Naive thymus-derived CD4-positive, alpha-beta T cell (primary cell): ENCODE measurements at regions of chr3 and their contacts with region 1.

Region 1: DNA sequence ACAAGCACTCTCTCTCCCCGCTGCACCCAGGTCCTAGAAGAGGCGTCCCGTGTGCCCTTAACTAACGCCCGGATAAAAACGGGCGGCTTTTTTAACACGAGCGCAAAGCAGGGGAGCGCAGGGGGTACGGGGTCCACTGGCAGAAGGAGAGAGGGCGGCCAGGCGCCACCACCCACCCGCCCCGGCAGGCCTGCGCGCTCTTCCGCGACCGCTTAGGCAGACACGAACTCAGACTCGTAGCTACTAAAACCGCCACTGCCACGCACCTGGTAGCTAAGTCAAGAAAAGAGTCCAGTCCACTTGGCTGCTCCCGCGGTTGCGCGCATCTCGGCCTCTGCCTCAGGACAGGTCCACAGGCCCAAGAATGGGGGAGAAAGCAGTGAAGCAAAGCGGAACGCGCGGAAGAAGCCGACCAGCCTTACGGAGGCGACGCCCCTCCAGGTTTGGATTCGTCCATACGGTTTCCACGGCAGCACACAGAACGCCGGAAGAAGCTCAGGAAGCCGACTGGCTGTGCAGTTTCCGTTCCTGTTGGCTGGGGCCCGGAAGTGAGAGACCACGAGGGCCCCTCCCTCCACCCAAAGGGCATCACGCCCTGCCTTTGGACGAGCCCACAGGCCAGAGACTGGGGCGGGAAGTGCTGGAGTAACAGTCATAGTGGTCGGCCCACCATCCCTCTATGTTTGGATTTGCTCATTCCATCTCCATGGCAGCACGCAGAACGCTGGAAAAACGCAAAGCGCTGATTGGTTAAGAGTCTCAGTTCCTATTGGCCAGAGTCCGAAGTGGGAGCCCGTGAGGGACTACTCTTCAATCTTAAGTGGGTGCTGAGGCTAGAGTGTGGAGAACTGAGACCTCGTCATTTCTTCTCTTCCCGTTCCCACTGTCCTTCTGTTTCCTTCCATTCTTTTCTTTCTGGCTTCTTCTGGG is at the start of gene ULK4:
- DNase-seq: peak; percentile 77 to 96 (median 94)
- ATAC-seq: peak; percentile 93
- H3K4me3 ChIP-seq: peak within 1 kb of the TSS; percentile 99
- H3K4me3 Mint-ChIP-seq: peak within 1 kb of the TSS; percentile 90 to 100 (median 98)
- H3K27ac ChIP-seq: peak within 1 kb of the TSS; percentile 83
- H3K27ac Mint-ChIP-seq: peak within 1 kb of the TSS; percentile 88 to 100 (median 96)
- H3K4me1 ChIP-seq: peaks cover 0 to 16% of the 10 kb centered on the region in 2 donors
- H3K4me1 Mint-ChIP-seq: peaks cover 8 to 22% (median 16%) of the 10 kb centered on the region in 7 donors
- H3K27me3 ChIP-seq: no peaks in the 10 kb centered on the region
- H3K27me3 Mint-ChIP-seq: peaks cover 0 to 3% (median 0%) of the 10 kb centered on the region in 5 donors
- total RNA-seq, gene ULK4: 14.0 to 22.3 (median 21.1) TPM

Region 2: DNA sequence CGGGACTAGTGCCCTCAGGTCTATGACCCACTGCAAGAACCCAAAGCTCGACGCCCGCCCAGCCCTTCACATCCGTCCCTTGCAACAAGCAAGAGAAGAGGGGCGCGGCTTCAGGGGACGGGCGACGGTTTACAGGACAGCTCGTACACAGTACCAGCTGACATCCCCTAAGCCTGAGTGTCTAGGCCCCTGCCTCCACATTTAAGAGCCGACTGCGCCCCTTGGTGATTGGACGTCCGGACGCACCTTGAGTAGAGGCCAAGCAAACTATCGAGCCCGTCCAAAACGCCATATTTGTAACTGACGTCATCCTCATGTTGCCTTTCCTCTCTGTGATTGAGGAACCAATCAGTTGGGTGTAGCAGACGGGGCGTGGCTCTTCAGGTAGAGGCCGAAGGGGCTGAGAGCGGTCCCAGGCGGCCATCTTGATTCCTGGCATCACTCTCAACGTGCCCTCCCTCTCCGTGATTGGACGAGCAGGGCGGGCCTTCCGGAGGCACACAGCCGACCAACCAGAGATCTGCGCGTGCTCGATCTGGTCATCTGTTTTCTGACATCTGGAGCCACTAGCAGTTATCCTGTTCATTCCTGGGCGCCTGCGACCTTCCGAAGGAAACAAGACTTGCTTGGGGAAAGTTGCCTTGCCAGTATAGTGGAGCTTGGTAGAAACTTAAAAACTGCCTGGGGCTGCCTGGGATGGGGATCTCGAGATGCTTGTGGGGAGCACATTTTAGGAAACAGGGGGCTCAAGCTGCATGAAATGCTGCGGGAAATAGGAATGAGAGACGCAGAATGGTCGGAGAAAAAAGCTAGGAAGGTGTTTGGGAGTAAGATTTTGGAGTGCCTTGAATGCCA is 1508.9 kb before region 1 on chr3:
- CTCF ChIA-PET with region 1: no interaction called
- POLR2A ChIA-PET with region 1: interaction called, 6 read pairs
- intact Hi-C with region 1: loop called (anchors 1 kb)
- DNase-seq: peak; percentile 81 to 97 (median 93)
- ATAC-seq: peak; percentile 95
- H3K4me3 ChIP-seq: peak overlapping the region; percentile 79
- H3K4me3 Mint-ChIP-seq: peak overlapping the region; percentile 88 to 99 (median 94)
- H3K27ac ChIP-seq: peak overlapping the region; percentile 94
- H3K27ac Mint-ChIP-seq: peak overlapping the region; percentile 96 to 100 (median 98)
- H3K4me1 ChIP-seq: peaks cover 13 to 18% of the 10 kb centered on the region in 2 donors
- H3K4me1 Mint-ChIP-seq: peaks cover 13 to 53% (median 39%) of the 10 kb centered on the region in 7 donors
- H3K27me3 ChIP-seq: no peaks in the 10 kb centered on the region
- H3K27me3 Mint-ChIP-seq: no peaks in the 10 kb centered on the region

Region 3: GRCh38 chr3:41198950-41199865 is 762.8 kb before region 1 on chr3 and contains the start of gene CTNNB1:
- CTCF ChIA-PET with region 1: no interaction called
- POLR2A ChIA-PET with region 1: interaction called, 3 read pairs
- intact Hi-C with region 1: loop called (anchors 1 kb)
- DNase-seq: peak; percentile 88 to 94 (median 92)
- ATAC-seq: peak; percentile 93
- H3K4me3 ChIP-seq: peak within 1 kb of the TSS; percentile 79
- H3K4me3 Mint-ChIP-seq: peak within 1 kb of the TSS; percentile 90 to 100 (median 95)
- H3K27ac ChIP-seq: peak within 1 kb of the TSS; percentile 97
- H3K27ac Mint-ChIP-seq: peak within 1 kb of the TSS; percentile 92 to 98 (median 96)
- H3K4me1 ChIP-seq: peaks cover 26 to 39% of the 10 kb centered on the region in 2 donors
- H3K4me1 Mint-ChIP-seq: peaks cover 31 to 43% (median 38%) of the 10 kb centered on the region in 7 donors
- H3K27me3 ChIP-seq: peaks cover 0 to 3% of the 10 kb centered on the region in 2 donors
- H3K27me3 Mint-ChIP-seq: peaks cover 0 to 29% (median 0%) of the 10 kb centered on the region in 5 donors
- total RNA-seq, gene CTNNB1: 118 to 227 (median 177) TPM

Region 4: GRCh38 chr3:41985018-41985417 is 23.0 kb after region 1 on chr3:
- CTCF ChIA-PET with region 1: no interaction called
- POLR2A ChIA-PET with region 1: no interaction called
- intact Hi-C with region 1: no loop called
- DNase-seq: no peak
- ATAC-seq: no peak
- H3K4me3 ChIP-seq: no peak overlapping the region
- H3K4me3 Mint-ChIP-seq: no peak overlapping the region
- H3K27ac ChIP-seq: no peak overlapping the region
- H3K27ac Mint-ChIP-seq: no peak overlapping the region
- H3K4me1 ChIP-seq: no peaks in the 10 kb centered on the region
- H3K4me1 Mint-ChIP-seq: peaks cover 0 to 3% (median 0%) of the 10 kb centered on the region in 7 donors
- H3K27me3 ChIP-seq: no peaks in the 10 kb centered on the region
- H3K27me3 Mint-ChIP-seq: peaks cover 0 to 3% (median 0%) of the 10 kb centered on the region in 5 donors

Region 5: GRCh38 chr3:42080452-42080891 is 118.5 kb after region 1 on chr3:
- CTCF ChIA-PET with region 1: no interaction called
- POLR2A ChIA-PET with region 1: no interaction called
- intact Hi-C with region 1: loop called in 1 of 2 experiments (anchors 5 kb)
- DNase-seq: no peak
- ATAC-seq: peak; percentile 58
- H3K4me3 ChIP-seq: no peak overlapping the region
- H3K4me3 Mint-ChIP-seq: peak overlapping the region in 2 of 10 donors; percentile 9 to 61
- H3K27ac ChIP-seq: no peak overlapping the region
- H3K27ac Mint-ChIP-seq: peak overlapping the region in 5 of 9 donors; percentile 40 to 75 (median 66)
- H3K4me1 ChIP-seq: peaks cover 13 to 16% of the 10 kb centered on the region in 2 donors
- H3K4me1 Mint-ChIP-seq: peaks cover 38 to 60% (median 43%) of the 10 kb centered on the region in 7 donors
- H3K27me3 ChIP-seq: no peaks in the 10 kb centered on the region
- H3K27me3 Mint-ChIP-seq: no peaks in the 10 kb centered on the region

Region 6: GRCh38 chr3:42214565-42215283 is 252.7 kb after region 1 on chr3:
- CTCF ChIA-PET with region 1: no interaction called
- POLR2A ChIA-PET with region 1: no interaction called
- intact Hi-C with region 1: loop called in 1 of 2 experiments (anchors 5 kb)
- DNase-seq: no peak
- ATAC-seq: no peak
- H3K4me3 ChIP-seq: no peak overlapping the region
- H3K4me3 Mint-ChIP-seq: peak overlapping the region in 9 of 10 donors; percentile 0 to 69 (median 49)
- H3K27ac ChIP-seq: peak overlapping the region; percentile 53
- H3K27ac Mint-ChIP-seq: peak overlapping the region; percentile 70 to 98 (median 85)
- H3K4me1 ChIP-seq: peaks cover 30 to 51% of the 10 kb centered on the region in 2 donors
- H3K4me1 Mint-ChIP-seq: peaks cover 28 to 65% (median 58%) of the 10 kb centered on the region in 7 donors
- H3K27me3 ChIP-seq: no peaks in the 10 kb centered on the region
- H3K27me3 Mint-ChIP-seq: no peaks in the 10 kb centered on the region

Region 7: GRCh38 chr3:43105596-43106292 is 1143.7 kb after region 1 on chr3 and contains the start of gene POMGNT2:
- CTCF ChIA-PET with region 1: no interaction called
- POLR2A ChIA-PET with region 1: no interaction called
- intact Hi-C with region 1: loop called in 1 of 2 experiments (anchors 5 kb)
- DNase-seq: peak; percentile 78 to 92 (median 88)
- ATAC-seq: peak; percentile 97
- H3K4me3 ChIP-seq: peak within 1 kb of the TSS; percentile 67
- H3K4me3 Mint-ChIP-seq: peak within 1 kb of the TSS; percentile 70 to 88 (median 85)
- H3K27ac ChIP-seq: peak within 1 kb of the TSS; percentile 76
- H3K27ac Mint-ChIP-seq: peak within 1 kb of the TSS in 8 of 9 donors; percentile 46 to 91 (median 71)
- H3K4me1 ChIP-seq: peaks cover 9 to 18% of the 10 kb centered on the region in 2 donors
- H3K4me1 Mint-ChIP-seq: peaks cover 11 to 38% (median 21%) of the 10 kb centered on the region in 7 donors
- H3K27me3 ChIP-seq: no peaks in the 10 kb centered on the region
- H3K27me3 Mint-ChIP-seq: peaks cover 0 to 9% (median 0%) of the 10 kb centered on the region in 5 donors
- total RNA-seq, gene POMGNT2: 3.5 to 7.9 (median 6.2) TPM